ENCODE measurements at regions of chr12 and their contacts with region 1.

Region 1: GRCh38 chr12:75087654-75088053 is 122.0 kb downstream of the KCNC2 start:
- DNase-seq: no peak
- H3K4me3 Mint-ChIP-seq: no peak overlapping the region
- H3K27ac Mint-ChIP-seq: no peak overlapping the region
- H3K4me1 Mint-ChIP-seq: no peaks in the 10 kb centered on the region
- H3K27me3 Mint-ChIP-seq: no peaks in the 10 kb centered on the region

Region 2: GRCh38 chr12:74801625-74802024 is 286.0 kb before region 1 on chr12:
- CTCF ChIA-PET with region 1: interaction called, 3 read pairs
- POLR2A ChIA-PET with region 1: no interaction called
- intact Hi-C with region 1: loop called (anchors 10 kb)
- DNase-seq: no peak
- H3K4me3 Mint-ChIP-seq: no peak overlapping the region
- H3K27ac Mint-ChIP-seq: no peak overlapping the region
- H3K4me1 Mint-ChIP-seq: no peaks in the 10 kb centered on the region
- H3K27me3 Mint-ChIP-seq: no peaks in the 10 kb centered on the region

Region 3: GRCh38 chr12:74890237-74890599 is 197.4 kb before region 1 on chr12:
- CTCF ChIA-PET with region 1: no interaction called
- POLR2A ChIA-PET with region 1: no interaction called
- intact Hi-C with region 1: loop called (anchors 10 kb)
- DNase-seq: peak; percentile 31
- H3K4me3 Mint-ChIP-seq: no peak overlapping the region
- H3K27ac Mint-ChIP-seq: no peak overlapping the region
- H3K4me1 Mint-ChIP-seq: peaks cover 34% of the 10 kb centered on the region
- H3K27me3 Mint-ChIP-seq: no peaks in the 10 kb centered on the region

Measured in activated CD4-positive, alpha-beta memory T cell treated with anti-CD3 and anti-CD28 coated beads for 36 hours (primary cell).